ENCODE measurements at regions of chr2 and their contacts with region 1.

Region 1: DNA sequence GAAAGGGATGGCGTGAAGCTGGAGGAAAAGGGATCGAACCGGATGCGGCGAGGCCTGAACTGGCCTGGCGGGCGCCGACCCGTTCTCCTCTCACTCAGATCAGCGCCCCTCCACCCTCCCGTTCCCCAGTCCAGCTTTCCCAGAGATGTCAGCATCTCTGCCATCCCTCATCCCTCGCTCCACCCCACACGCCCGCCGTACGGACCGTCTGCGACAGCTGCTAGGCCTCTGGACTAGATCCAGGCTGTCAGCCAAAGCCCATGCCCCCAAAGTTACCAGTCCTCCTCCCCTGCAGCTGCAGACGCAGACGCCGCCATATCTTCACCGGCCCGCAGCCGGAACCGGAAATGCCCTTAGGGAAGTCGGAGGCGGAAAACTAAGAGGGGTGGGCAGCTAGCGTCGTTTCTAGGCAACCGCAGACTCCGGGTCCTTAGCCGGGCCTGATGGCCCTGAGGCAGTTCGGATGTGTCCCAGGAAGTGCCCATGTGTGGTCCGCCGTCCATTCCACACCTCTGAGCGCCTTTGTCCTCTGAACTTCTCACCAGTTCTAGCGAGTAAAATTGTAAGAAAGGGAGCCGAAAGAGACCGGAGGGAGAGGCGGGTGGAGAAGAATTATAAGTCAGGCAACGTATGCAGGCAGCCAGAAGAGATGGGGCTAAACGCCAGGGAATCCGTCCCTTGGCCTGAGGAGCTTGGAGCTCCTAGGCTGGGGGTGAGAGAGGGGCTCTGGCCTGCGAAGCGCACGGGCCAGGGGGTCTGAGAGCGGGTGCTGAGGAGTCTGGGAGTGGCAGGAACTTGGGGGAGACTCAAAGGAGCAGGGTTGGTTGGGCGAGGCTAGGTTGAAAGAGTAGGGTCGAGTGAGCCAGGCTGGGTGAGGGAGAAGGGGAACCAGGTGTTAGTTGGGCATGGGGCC is at the starts of genes RNF25 and STK36:
- DNase-seq: peak; percentile 89
- ATAC-seq: peak; percentile 92
- H3K4me3 Mint-ChIP-seq: peak within 1 kb of the TSS; percentile 88
- H3K27ac Mint-ChIP-seq: peak within 1 kb of the TSS; percentile 93
- H3K4me1 Mint-ChIP-seq: peaks cover 26% of the 10 kb centered on the region
- H3K27me3 Mint-ChIP-seq: no peaks in the 10 kb centered on the region
- total RNA-seq, gene RNF25: 19.0 to 25.8 TPM
- total RNA-seq, gene STK36: 12.1 to 15.2 TPM

Region 2: GRCh38 chr2:218659258-218659987 is 12.5 kb before region 1 on chr2 and contains the starts of genes BCS1L and ZNF142:
- CTCF ChIA-PET with region 1: interaction called, 51 read pairs
- POLR2A ChIA-PET with region 1: interaction called, 39 read pairs
- DNase-seq: peak; percentile 97
- ATAC-seq: peak; percentile 96
- H3K4me3 Mint-ChIP-seq: peak within 1 kb of the TSS; percentile 90
- H3K27ac Mint-ChIP-seq: peak within 1 kb of the TSS; percentile 90
- H3K4me1 Mint-ChIP-seq: peaks cover 31% of the 10 kb centered on the region
- H3K27me3 Mint-ChIP-seq: no peaks in the 10 kb centered on the region
- total RNA-seq, gene BCS1L: 50.1 to 50.5 TPM
- total RNA-seq, gene ZNF142: 49.2 to 53.1 TPM

Region 3: DNA sequence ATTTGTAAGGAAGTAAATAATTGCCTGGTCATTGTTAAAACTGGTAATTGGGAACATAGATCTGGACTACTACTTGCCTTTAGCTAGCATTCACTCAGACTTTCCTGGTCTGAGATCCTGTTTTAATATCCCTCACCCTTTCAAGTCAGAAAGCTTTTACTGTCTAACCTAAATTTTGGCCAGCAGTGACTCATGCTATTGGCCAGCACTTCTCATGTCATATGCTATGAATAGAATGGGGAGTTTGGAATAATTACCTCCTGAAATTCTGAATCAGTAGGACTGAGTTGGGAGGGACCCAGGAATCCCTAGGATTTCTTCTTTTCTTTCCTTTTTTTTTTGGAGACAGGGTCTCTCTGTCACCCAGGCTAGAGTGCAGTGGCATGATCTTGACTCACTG is 19.3 kb after region 1 on chr2:
- CTCF ChIA-PET with region 1: interaction called, 22 read pairs
- POLR2A ChIA-PET with region 1: no interaction called
- DNase-seq: no peak
- ATAC-seq: no peak
- H3K4me3 Mint-ChIP-seq: no peak overlapping the region
- H3K27ac Mint-ChIP-seq: no peak overlapping the region
- H3K4me1 Mint-ChIP-seq: peaks cover 2% of the 10 kb centered on the region
- H3K27me3 Mint-ChIP-seq: no peaks in the 10 kb centered on the region

Region 4: GRCh38 chr2:218710687-218711549 is 39.0 kb after region 1 on chr2 and contains the start of gene TTLL4:
- CTCF ChIA-PET with region 1: interaction called, 11 read pairs
- POLR2A ChIA-PET with region 1: interaction called, 3 read pairs
- DNase-seq: peak; percentile 99
- ATAC-seq: peak; percentile 99
- H3K4me3 Mint-ChIP-seq: peak within 1 kb of the TSS; percentile 96
- H3K27ac Mint-ChIP-seq: peak within 1 kb of the TSS; percentile 76
- H3K4me1 Mint-ChIP-seq: peaks cover 38% of the 10 kb centered on the region
- H3K27me3 Mint-ChIP-seq: peaks cover 2% of the 10 kb centered on the region
- total RNA-seq, gene TTLL4: 25.8 to 27.7 TPM

Measured in activated CD8-positive, alpha-beta T cell treated with anti-CD3 and anti-CD28 coated beads, Interleukin-2, amount 10 ng/mL, durations not matched to agents 7 days and 5 days (primary cell).